ENCODE measurements at regions of chr12 and their contacts with region 1.

Region 1: DNA sequence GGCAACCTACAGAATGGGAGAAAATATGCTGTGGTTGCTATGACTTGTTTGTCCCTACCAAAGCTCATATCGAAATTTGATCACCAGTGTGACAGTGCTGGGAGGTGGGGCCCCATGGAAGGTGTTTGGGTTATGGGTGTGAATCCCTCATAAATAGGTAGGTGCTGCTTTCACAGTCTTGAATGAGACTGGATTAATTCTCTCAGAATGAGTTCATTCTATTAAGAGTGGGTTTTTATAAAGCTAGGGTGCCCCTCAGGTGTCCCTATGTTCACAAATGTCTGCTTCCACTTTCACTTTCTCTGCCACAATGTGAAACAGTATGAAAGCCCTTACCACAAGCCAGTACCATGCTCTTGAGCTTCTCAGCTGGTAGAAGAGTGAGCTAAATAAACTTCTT is 133.5 kb downstream of the CPNE8 start:
- DNase-seq: peak; percentile 71
- H3K4me3 Mint-ChIP-seq: peak overlapping the region; percentile 50
- H3K27ac Mint-ChIP-seq: peak overlapping the region; percentile 72
- H3K4me1 Mint-ChIP-seq: peaks cover 9% of the 10 kb centered on the region
- H3K27me3 Mint-ChIP-seq: no peaks in the 10 kb centered on the region

Region 2: GRCh38 chr12:38825006-38825405 is 53.1 kb after region 1 on chr12:
- intact Hi-C with region 1: loop called (anchors 5 kb)
- DNase-seq: no peak
- H3K4me3 Mint-ChIP-seq: no peak overlapping the region
- H3K27ac Mint-ChIP-seq: no peak overlapping the region
- H3K4me1 Mint-ChIP-seq: no peaks in the 10 kb centered on the region
- H3K27me3 Mint-ChIP-seq: no peaks in the 10 kb centered on the region

Region 3: GRCh38 chr12:38838056-38838850 is 66.4 kb after region 1 on chr12:
- intact Hi-C with region 1: no loop called
- DNase-seq: no peak
- H3K4me3 Mint-ChIP-seq: no peak overlapping the region
- H3K27ac Mint-ChIP-seq: no peak overlapping the region
- H3K4me1 Mint-ChIP-seq: no peaks in the 10 kb centered on the region
- H3K27me3 Mint-ChIP-seq: no peaks in the 10 kb centered on the region